Activated T-helper 2 cell treated with anti-CD3 and anti-CD28 coated beads, Interferon-gamma antibody, Interleukin-2, Interleukin-4, amounts not matched to agents 10 μg/mL and 5 μg/mL and 100 μg/mL, durations not matched to agents 14 hours and 24 hours and 36 hours (primary cell): ENCODE measurements at regions of chr10 and their contacts with region 1.

Region 1: GRCh38 chr10:43648398-43649184 is at the start of gene ZNF32:
- DNase-seq: peak; percentile 74
- H3K4me3 Mint-ChIP-seq: peak within 1 kb of the TSS; percentile 82
- H3K27ac Mint-ChIP-seq: peak within 1 kb of the TSS; percentile 72
- H3K4me1 Mint-ChIP-seq: peaks cover 10% of the 10 kb centered on the region
- H3K27me3 Mint-ChIP-seq: peaks cover 6% of the 10 kb centered on the region
- total RNA-seq, gene ZNF32: 12.1 and 12.9 TPM in 2 replicates

Region 2: GRCh38 chr10:43574001-43574892 is 74.3 kb before region 1 on chr10 and contains the start of gene ZNF239:
- intact Hi-C with region 1: loop called (anchors 1 kb)
- DNase-seq: peak; percentile 60
- H3K4me3 Mint-ChIP-seq: peak within 1 kb of the TSS; percentile 68
- H3K27ac Mint-ChIP-seq: no peak within 1 kb of the TSS
- H3K4me1 Mint-ChIP-seq: peaks cover 23% of the 10 kb centered on the region
- H3K27me3 Mint-ChIP-seq: no peaks in the 10 kb centered on the region
- total RNA-seq, gene ZNF239: 0.66 and 0.97 TPM in 2 replicates

Region 3: GRCh38 chr10:43606322-43607198 is 42.0 kb before region 1 on chr10 and contains the start of gene ZNF485:
- intact Hi-C with region 1: loop called (anchors 2 kb)
- DNase-seq: peak; percentile 41
- H3K4me3 Mint-ChIP-seq: peak within 1 kb of the TSS; percentile 83
- H3K27ac Mint-ChIP-seq: peak within 1 kb of the TSS; percentile 67
- H3K4me1 Mint-ChIP-seq: peaks cover 14% of the 10 kb centered on the region
- H3K27me3 Mint-ChIP-seq: peaks cover 4% of the 10 kb centered on the region
- total RNA-seq, gene ZNF485: 5.6 and 6.5 TPM in 2 replicates